ENCODE measurements at regions of chr11 and their contacts with region 1.

Region 1: GRCh38 chr11:63536669-63537292 is at the start of gene PLAAT4:
- DNase-seq: peak in 9 of 14 experiments; percentile 16 to 82 (median 37)
- ATAC-seq: peak; percentile 62
- H3K4me3 ChIP-seq: peak within 1 kb of the TSS; percentile 90
- H3K4me3 Mint-ChIP-seq: peak within 1 kb of the TSS; percentile 100
- H3K27ac ChIP-seq: peak within 1 kb of the TSS; percentile 81 to 82
- H3K27ac Mint-ChIP-seq: peak within 1 kb of the TSS; percentile 98
- H3K4me1 ChIP-seq: peaks cover 87% of the 10 kb centered on the region
- H3K4me1 Mint-ChIP-seq: peaks cover 92% of the 10 kb centered on the region
- H3K27me3 ChIP-seq: no peaks in the 10 kb centered on the region
- H3K27me3 Mint-ChIP-seq: no peaks in the 10 kb centered on the region
- CTCF ChIP-seq: no peak
- total RNA-seq, gene PLAAT4: 80.4 to 82.4 TPM

Region 2: DNA sequence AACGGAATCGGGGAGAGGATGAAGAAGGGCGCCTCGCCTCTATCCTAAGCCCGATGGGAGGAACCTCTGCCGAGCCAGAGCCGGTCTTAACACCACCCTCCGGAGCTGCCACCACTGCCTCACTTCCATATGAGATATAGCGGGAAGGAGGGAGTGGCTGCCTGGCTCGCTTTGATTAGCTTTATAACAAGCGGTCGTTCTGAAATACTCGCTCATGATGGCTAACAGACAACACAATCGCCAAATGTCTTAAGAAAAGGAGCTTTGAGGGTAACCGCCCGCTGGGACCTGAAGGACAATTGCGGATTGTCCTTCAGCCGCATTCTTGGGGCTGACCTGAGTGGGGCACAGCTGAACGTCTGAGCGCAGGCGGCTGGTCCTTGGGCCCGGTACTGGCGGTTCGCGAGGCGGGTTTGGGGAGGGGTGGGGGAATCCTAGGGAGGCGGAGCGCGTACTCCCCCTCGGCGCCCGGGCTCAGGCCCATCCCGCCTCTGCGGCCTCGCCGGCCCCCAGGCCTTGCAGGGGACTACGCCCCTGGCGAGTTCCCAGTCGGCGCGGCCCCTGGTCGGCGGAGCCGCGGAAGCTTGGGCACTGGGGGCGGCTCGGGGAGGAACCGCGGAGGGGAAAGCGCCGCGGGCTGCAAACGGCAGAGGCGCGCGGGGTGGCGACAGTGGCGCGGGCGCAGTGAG is 46.1 kb before region 1 on chr11 and contains the start of gene PLAAT5:
- CTCF ChIA-PET with region 1: no interaction called
- POLR2A ChIA-PET with region 1: interaction called, 13 read pairs
- intact Hi-C with region 1: no loop called
- DNase-seq: peak in 7 of 14 experiments; percentile 10 to 41 (median 17)
- ATAC-seq: peak; percentile 26
- H3K4me3 ChIP-seq: peak within 1 kb of the TSS; percentile 43
- H3K4me3 Mint-ChIP-seq: peak within 1 kb of the TSS; percentile 80
- H3K27ac ChIP-seq: no peak within 1 kb of the TSS
- H3K27ac Mint-ChIP-seq: peak within 1 kb of the TSS; percentile 31
- H3K4me1 ChIP-seq: peaks cover 14% of the 10 kb centered on the region
- H3K4me1 Mint-ChIP-seq: peaks cover 16% of the 10 kb centered on the region
- H3K27me3 ChIP-seq: peaks cover 4 to 5% of the 10 kb centered on the region in 2 experiments
- H3K27me3 Mint-ChIP-seq: peaks cover 34% of the 10 kb centered on the region
- CTCF ChIP-seq: no peak
- total RNA-seq, gene PLAAT5: 0.16 TPM in 1 of 2 experiments, not detected in the other

Region 3: DNA sequence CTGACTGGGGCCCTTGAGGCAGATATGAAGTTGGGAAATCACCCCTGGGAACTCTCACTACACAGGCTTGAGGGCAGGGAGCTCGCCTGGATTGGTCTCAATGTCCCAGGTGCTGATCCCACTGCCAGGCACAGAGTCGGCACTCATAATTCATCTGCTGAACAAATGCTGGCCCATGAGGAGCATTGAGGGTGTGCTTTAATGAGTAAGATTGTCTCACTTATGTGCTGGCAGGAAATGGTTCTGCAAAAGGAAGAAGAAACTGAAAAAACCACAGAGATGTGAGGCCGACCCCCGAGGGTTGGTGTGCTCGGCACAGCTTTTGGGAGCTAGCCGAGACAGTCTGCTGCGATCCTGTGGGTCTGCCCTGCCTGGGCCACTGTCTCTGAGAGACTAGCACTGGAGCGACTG is 17.0 kb after region 1 on chr11:
- CTCF ChIA-PET with region 1: no interaction called
- POLR2A ChIA-PET with region 1: interaction called, 86 read pairs
- intact Hi-C with region 1: loop called (anchors 1 to 2 kb)
- DNase-seq: peak in 13 of 14 experiments; percentile 40 to 82 (median 62)
- ATAC-seq: peak; percentile 80
- H3K4me3 ChIP-seq: peak overlapping the region; percentile 15
- H3K4me3 Mint-ChIP-seq: peak overlapping the region; percentile 90
- H3K27ac ChIP-seq: peak overlapping the region; percentile 48 to 63
- H3K27ac Mint-ChIP-seq: peak overlapping the region; percentile 89
- H3K4me1 ChIP-seq: peaks cover 47% of the 10 kb centered on the region
- H3K4me1 Mint-ChIP-seq: peaks cover 71% of the 10 kb centered on the region
- H3K27me3 ChIP-seq: no peaks in the 10 kb centered on the region
- H3K27me3 Mint-ChIP-seq: no peaks in the 10 kb centered on the region
- CTCF ChIP-seq: no peak

Region 4: GRCh38 chr11:63567044-63567840 is 30.5 kb after region 1 on chr11:
- CTCF ChIA-PET with region 1: interaction called, 4 read pairs
- POLR2A ChIA-PET with region 1: interaction called, 19 read pairs
- intact Hi-C with region 1: loop called in 1 of 2 experiments (anchors 1 kb)
- DNase-seq: peak in 12 of 14 experiments; percentile 29 to 95 (median 49)
- ATAC-seq: peak; percentile 84
- H3K4me3 ChIP-seq: no peak overlapping the region
- H3K4me3 Mint-ChIP-seq: peak overlapping the region; percentile 22
- H3K27ac ChIP-seq: peak overlapping the region; percentile 67 to 82
- H3K27ac Mint-ChIP-seq: peak overlapping the region; percentile 91
- H3K4me1 ChIP-seq: peaks cover 37% of the 10 kb centered on the region
- H3K4me1 Mint-ChIP-seq: peaks cover 46% of the 10 kb centered on the region
- H3K27me3 ChIP-seq: no peaks in the 10 kb centered on the region
- H3K27me3 Mint-ChIP-seq: no peaks in the 10 kb centered on the region
- CTCF ChIP-seq: no peak

Region 5: DNA sequence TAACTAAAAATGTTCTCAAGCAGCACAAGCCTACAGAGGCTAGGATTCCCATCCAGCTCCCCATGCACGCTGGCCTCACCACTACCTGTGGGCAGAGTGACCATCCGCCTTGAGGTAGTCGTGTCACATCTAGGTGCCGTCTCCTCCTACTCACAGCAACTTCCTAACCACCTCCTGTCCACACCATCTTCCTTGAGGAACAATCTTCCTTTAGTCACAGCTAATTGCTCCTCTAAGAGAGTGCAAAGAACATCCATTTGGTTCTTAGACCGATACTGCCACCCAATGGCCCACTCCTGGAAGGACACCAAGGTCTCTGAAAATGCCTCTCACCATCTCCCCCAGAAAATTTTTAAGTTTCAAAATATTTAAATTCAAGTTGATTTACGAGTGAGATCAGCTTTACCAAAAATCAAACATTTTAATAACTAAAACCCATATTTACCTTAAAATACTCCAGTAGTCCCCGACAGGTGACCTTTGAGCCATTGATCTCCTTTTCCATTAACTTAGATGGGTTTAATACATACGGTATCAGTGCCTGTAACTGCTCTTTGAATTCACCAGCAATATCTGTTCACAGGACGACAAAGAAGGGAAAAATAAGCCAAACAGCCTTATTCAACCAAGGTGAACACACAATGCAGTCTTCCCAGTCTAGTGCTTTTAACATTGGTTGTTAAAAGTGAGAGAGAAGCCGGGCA is 99.1 kb after region 1 on chr11:
- CTCF ChIA-PET with region 1: interaction called, 5 read pairs
- POLR2A ChIA-PET with region 1: interaction called, 13 read pairs
- intact Hi-C with region 1: loop called in 1 of 2 experiments (anchors 10 kb)
- DNase-seq: peak; percentile 59 to 84 (median 70)
- ATAC-seq: peak; percentile 93
- H3K4me3 ChIP-seq: no peak overlapping the region
- H3K4me3 Mint-ChIP-seq: no peak overlapping the region
- H3K27ac ChIP-seq: no peak overlapping the region
- H3K27ac Mint-ChIP-seq: no peak overlapping the region
- H3K4me1 ChIP-seq: peaks cover 5% of the 10 kb centered on the region
- H3K4me1 Mint-ChIP-seq: peaks cover 16% of the 10 kb centered on the region
- H3K27me3 ChIP-seq: no peaks in the 10 kb centered on the region
- H3K27me3 Mint-ChIP-seq: no peaks in the 10 kb centered on the region
- CTCF ChIP-seq: peak; percentile 86

Measured in CD4-positive, alpha-beta T cell (primary cell).